ENCODE measurements at regions of chr14 and their contacts with region 1.

Region 1: GRCh38 chr14:63437953-63438757 is 105.0 kb downstream of the PPP2R5E start:
- DNase-seq: peak; percentile 67
- H3K4me3 Mint-ChIP-seq: peak overlapping the region; percentile 16
- H3K27ac Mint-ChIP-seq: peak overlapping the region; percentile 61
- H3K4me1 Mint-ChIP-seq: peaks cover 42% of the 10 kb centered on the region
- H3K27me3 Mint-ChIP-seq: no peaks in the 10 kb centered on the region
- CTCF ChIP-seq: no peak

Region 2: GRCh38 chr14:63470962-63471793 is 33.0 kb after region 1 on chr14:
- CTCF ChIA-PET with region 1: interaction called, 4 read pairs
- intact Hi-C with region 1: loop called (anchors 5 kb)
- DNase-seq: no peak
- H3K4me3 Mint-ChIP-seq: peak overlapping the region; percentile 53
- H3K27ac Mint-ChIP-seq: no peak overlapping the region
- H3K4me1 Mint-ChIP-seq: peaks cover 16% of the 10 kb centered on the region
- H3K27me3 Mint-ChIP-seq: no peaks in the 10 kb centered on the region
- CTCF ChIP-seq: no peak